ENCODE measurements at regions of chr15 and their contacts with region 1.

Region 1: GRCh38 chr15:65769482-65769881 is 22.6 kb downstream of the DENND4A start:
- DNase-seq: no peak
- H3K4me3 ChIP-seq: no peak overlapping the region
- H3K27ac ChIP-seq: no peak overlapping the region
- H3K4me1 ChIP-seq: no peaks in the 10 kb centered on the region
- H3K27me3 ChIP-seq: no peaks in the 10 kb centered on the region
- CTCF ChIP-seq: no peak

Region 2: GRCh38 chr15:65752151-65752700 is 17.3 kb before region 1 on chr15:
- CTCF ChIA-PET with region 1: no interaction called
- POLR2A ChIA-PET with region 1: interaction called, 31 read pairs
- intact Hi-C with region 1: no loop called
- DNase-seq: no peak
- H3K4me3 ChIP-seq: no peak overlapping the region
- H3K27ac ChIP-seq: no peak overlapping the region
- H3K4me1 ChIP-seq: no peaks in the 10 kb centered on the region
- H3K27me3 ChIP-seq: no peaks in the 10 kb centered on the region
- CTCF ChIP-seq: no peak

Region 3: GRCh38 chr15:65881766-65882434 is 112.4 kb after region 1 on chr15:
- CTCF ChIA-PET with region 1: no interaction called
- POLR2A ChIA-PET with region 1: no interaction called
- intact Hi-C with region 1: no loop called
- DNase-seq: no peak
- H3K4me3 ChIP-seq: no peak overlapping the region
- H3K27ac ChIP-seq: no peak overlapping the region
- H3K4me1 ChIP-seq: no peaks in the 10 kb centered on the region
- H3K27me3 ChIP-seq: no peaks in the 10 kb centered on the region
- CTCF ChIP-seq: no peak